Activated T-helper 2 cell treated with anti-CD3 and anti-CD28 coated beads, Interferon-gamma antibody, Interleukin-2, Interleukin-4, amounts not matched to agents 10 μg/mL and 5 μg/mL and 100 μg/mL, durations not matched to agents 14 hours and 24 hours and 36 hours (primary cell): ENCODE measurements at regions of chr5 and their contacts with region 1.

Region 1: DNA sequence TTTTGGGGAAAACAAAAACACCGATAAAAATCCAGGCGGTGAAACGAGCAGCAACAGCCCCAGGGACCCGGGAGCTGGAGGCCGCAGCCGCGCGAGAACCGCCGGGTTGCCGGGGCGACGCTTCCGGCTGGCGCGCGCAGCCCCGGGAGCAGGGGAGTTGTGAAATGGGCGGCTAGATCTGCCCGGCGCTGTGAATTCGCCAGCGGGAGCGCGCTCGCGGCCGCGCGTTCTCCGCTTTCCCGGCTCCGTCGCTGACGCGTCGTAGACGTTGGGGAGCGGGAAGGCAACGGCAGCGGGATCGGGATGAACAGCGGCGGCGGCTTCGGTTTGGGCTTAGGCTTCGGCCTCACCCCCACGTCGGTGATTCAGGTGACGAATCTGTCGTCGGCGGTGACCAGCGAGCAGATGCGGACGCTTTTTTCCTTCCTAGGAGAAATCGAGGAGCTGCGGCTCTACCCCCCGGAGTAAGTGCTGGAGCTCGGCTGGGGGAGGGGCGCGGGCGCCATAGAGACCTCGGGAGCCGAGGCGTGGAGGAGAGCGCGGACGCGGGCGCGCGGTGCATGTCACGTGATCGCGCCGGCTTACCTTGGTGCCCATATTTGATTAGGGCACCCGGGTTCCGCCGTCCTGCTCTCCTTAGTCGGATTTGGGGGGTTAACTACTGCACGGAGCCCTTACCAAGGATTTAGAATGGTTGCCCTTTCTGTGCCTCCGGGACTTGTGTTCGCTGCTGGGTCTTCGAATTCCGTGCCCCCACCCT is at the start of gene SREK1:
- DNase-seq: peak; percentile 85
- H3K4me3 Mint-ChIP-seq: peak within 1 kb of the TSS; percentile 92
- H3K27ac Mint-ChIP-seq: peak within 1 kb of the TSS; percentile 99
- H3K4me1 Mint-ChIP-seq: peaks cover 37% of the 10 kb centered on the region
- H3K27me3 Mint-ChIP-seq: no peaks in the 10 kb centered on the region
- total RNA-seq, gene SREK1: 67.8 and 69.9 TPM in 2 replicates

Region 2: GRCh38 chr5:65721720-65722574 is 422.3 kb before region 1 on chr5 and contains the starts of genes NLN and SGTB:
- intact Hi-C with region 1: loop called (anchors 2 kb)
- DNase-seq: peak; percentile 79
- H3K4me3 Mint-ChIP-seq: peak within 1 kb of the TSS; percentile 93
- H3K27ac Mint-ChIP-seq: peak within 1 kb of the TSS; percentile 88
- H3K4me1 Mint-ChIP-seq: peaks cover 29% of the 10 kb centered on the region
- H3K27me3 Mint-ChIP-seq: no peaks in the 10 kb centered on the region
- total RNA-seq, gene NLN: 22.5 and 22.8 TPM in 2 replicates
- total RNA-seq, gene SGTB: 7.6 TPM in 2 replicates

Region 3: DNA sequence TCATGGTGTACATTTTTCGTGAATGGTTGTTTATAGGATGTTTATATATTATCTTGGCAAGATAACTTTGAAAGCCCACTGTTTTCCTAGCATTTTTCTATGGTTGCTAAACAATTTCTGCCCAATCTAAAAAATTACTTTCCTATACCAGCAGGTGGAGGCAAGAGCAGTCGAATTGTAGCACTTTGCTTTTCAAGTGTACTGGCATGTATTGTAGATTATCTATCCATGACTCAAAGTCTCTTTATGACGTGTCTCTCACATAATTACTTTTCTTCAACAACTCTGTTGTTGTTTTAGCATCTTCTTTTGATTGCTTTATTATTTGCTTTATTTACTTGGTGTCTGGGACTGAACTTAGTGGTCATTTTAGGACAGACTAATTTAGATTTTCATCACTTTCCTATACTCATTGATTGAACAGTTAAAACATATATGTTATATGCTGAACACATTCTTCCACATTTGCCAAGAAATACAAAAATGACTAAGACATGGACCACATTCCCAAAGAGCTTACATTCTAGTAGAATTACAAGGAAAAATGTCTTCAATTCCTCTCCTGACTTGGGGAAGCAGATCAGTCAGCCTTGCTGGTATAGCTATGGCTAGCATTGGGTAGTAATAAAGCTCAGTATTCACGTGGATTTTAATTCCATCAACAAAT is 401.6 kb before region 1 on chr5:
- intact Hi-C with region 1: loop called (anchors 5 kb)
- DNase-seq: no peak
- H3K4me3 Mint-ChIP-seq: no peak overlapping the region
- H3K27ac Mint-ChIP-seq: no peak overlapping the region
- H3K4me1 Mint-ChIP-seq: peaks cover 12% of the 10 kb centered on the region
- H3K27me3 Mint-ChIP-seq: no peaks in the 10 kb centered on the region

Region 4: DNA sequence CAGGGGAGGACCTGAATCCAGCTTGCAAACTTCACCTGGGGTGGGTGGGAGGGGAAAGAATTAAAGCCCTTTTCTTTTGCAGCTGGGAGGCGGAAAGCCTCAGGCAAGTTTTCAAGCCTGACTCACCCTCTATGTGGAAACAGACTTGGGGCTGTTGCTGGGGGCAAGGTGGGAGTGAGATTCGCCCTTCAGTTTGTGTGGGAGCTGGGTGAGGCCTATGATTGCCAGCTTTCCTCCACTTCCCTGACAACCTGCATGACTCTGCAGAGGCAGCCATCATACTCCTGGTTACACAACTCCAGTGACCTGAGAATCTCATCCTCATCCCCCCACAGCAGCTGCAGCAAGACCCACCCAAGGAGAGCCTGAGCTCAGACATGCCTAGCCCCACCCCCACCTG is 43.4 kb before region 1 on chr5:
- intact Hi-C with region 1: no loop called
- DNase-seq: no peak
- H3K4me3 Mint-ChIP-seq: no peak overlapping the region
- H3K27ac Mint-ChIP-seq: no peak overlapping the region
- H3K4me1 Mint-ChIP-seq: no peaks in the 10 kb centered on the region
- H3K27me3 Mint-ChIP-seq: no peaks in the 10 kb centered on the region

Region 5: DNA sequence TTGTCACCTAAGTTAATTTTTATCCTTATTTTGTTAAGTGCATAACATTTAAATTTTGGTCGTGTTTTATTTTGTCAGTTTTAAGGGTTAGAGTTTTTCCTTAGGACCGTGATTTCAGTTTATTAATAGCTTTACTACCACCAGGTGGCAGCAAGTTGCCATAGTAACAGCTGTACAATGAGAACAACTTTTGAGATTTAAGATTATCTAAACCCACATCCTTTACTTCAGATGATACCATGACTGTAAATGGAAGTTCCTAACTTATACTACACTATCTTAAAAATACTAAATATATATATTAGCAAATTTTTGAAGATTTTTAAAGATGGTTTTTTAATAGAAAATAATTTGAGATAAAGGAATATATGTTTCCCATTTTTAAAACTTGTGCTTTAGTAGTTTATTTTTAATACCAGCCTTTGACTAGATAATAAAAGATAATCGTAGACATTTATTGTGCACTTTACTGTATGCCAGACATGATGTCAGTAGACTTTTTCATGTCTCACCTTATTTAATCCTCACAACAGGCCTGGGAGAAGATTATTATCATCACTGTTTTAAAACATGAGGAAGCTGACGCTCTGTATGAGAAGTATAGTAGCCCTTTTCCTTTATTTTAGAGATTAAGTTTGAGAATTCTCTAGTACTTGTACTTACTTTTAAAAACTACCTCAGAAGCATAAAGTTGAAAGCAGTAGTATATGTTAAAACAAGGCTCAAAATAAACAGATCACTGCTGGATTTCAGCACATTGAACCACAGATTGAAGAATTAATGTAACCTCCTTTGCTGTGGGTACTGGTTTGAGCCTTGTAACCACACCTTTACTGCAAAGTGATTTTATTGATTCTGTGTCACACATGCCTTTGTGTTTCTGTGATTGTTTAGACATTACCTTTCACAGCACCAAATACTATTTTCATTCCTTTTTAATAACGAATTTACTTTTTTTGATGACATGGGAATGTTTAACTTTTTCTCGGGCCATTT is 27.4 kb after region 1 on chr5:
- intact Hi-C with region 1: loop called (anchors 2 kb)
- DNase-seq: peak; percentile 29
- H3K4me3 Mint-ChIP-seq: no peak overlapping the region
- H3K27ac Mint-ChIP-seq: peak overlapping the region; percentile 28
- H3K4me1 Mint-ChIP-seq: peaks cover 28% of the 10 kb centered on the region
- H3K27me3 Mint-ChIP-seq: no peaks in the 10 kb centered on the region